Activated CD4-positive, alpha-beta T cell treated with anti-CD3 and anti-CD28 coated beads for 36 hours (primary cell): ENCODE measurements at regions of chr15 and their contacts with region 1.

Region 1: DNA sequence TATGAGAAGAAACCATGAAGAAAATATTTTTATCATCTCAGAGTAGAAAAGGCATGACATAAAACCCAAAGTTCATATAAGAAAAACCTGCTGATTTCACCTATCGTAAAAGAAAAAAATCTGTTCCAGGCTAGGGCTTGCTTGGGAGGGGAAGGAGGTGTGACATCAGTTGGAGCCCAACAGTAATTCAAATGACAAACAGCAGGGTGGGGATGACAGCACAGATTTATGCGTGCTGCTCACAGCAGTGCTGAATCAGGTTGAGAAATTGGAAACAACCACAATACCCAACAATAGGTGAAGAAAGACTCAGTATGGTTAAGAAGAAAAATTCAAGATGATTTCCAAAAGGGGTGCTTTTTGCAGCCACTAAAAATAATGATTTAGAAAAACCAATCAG is 172.4 kb downstream of the PDE8A start:
- DNase-seq: peak; percentile 12
- ATAC-seq: peak; percentile 47
- H3K4me3 Mint-ChIP-seq: no peak overlapping the region
- H3K27ac Mint-ChIP-seq: no peak overlapping the region
- H3K4me1 Mint-ChIP-seq: peaks cover 18% of the 10 kb centered on the region
- H3K27me3 Mint-ChIP-seq: no peaks in the 10 kb centered on the region

Region 2: DNA sequence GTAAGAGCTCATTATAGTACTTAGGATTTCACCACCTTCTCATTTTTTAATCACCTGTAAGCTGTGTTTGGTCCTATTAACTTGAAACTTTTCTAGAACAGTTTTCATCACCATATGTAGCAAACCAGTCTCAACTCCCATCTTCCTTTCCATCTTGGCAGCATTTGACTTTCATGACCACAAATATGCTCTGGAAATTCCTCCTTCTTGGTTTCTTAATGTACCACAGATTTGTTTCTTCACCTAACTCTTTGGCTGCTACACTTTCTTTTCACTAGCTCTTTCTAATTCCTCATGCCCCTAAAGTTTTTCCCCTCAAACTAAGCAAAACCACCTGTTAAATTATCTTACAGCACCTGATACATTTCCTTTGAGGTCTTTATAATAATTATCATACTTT is 482.9 kb before region 1 on chr15:
- CTCF ChIA-PET with region 1: no interaction called
- POLR2A ChIA-PET with region 1: no interaction called
- intact Hi-C with region 1: no loop called
- DNase-seq: no peak
- ATAC-seq: no peak
- H3K4me3 Mint-ChIP-seq: no peak overlapping the region
- H3K27ac Mint-ChIP-seq: peak overlapping the region; percentile 59
- H3K4me1 Mint-ChIP-seq: peaks cover 50% of the 10 kb centered on the region
- H3K27me3 Mint-ChIP-seq: no peaks in the 10 kb centered on the region

Region 3: GRCh38 chr15:85112997-85113396 is 41.1 kb before region 1 on chr15:
- CTCF ChIA-PET with region 1: no interaction called
- POLR2A ChIA-PET with region 1: no interaction called
- intact Hi-C with region 1: loop called in 1 of 2 experiments (anchors 5 kb)
- DNase-seq: no peak
- ATAC-seq: no peak
- H3K4me3 Mint-ChIP-seq: no peak overlapping the region
- H3K27ac Mint-ChIP-seq: no peak overlapping the region
- H3K4me1 Mint-ChIP-seq: peaks cover 10% of the 10 kb centered on the region
- H3K27me3 Mint-ChIP-seq: no peaks in the 10 kb centered on the region

Region 4: DNA sequence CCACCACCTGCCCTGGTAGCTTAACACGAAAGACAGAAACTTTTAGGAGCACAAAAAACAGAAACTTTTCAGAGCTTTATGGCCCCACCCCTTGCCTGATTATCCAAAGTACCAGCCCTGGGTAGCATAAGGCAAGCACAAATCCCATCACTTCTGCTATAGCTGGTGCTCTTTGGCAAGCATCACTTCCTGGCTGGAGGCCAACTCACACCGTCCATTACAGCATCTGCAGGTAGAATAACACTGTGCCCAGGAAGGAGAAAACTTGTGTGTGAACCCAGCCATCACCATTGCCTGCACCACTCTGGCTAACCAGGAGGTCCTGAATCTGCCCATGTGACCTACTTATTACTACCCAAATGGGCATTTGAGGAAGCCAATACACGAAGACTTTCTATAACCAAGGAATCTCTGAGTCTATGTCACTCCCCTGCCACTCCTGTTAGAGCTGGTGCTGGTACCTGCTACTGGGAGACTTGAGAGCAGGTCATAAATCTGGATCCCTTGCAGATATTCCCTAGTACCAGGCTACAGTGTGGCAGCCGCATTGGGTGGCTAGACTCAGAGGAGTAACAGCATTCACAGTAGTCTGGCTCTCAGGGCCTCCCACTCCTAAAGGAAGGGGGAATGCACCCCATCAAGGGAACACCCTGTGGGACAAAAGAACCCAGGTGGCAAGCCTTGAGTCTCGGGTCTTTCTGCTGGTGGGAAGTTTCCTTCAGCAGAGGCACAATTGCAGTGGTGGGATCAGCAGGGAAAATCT is 153.1 kb after region 1 on chr15:
- CTCF ChIA-PET with region 1: no interaction called
- POLR2A ChIA-PET with region 1: no interaction called
- intact Hi-C with region 1: no loop called
- DNase-seq: no peak
- ATAC-seq: no peak
- H3K4me3 Mint-ChIP-seq: no peak overlapping the region
- H3K27ac Mint-ChIP-seq: no peak overlapping the region
- H3K4me1 Mint-ChIP-seq: peaks cover 8% of the 10 kb centered on the region
- H3K27me3 Mint-ChIP-seq: no peaks in the 10 kb centered on the region